ENCODE measurements at regions of chr2 and their contacts with region 1.

Region 1: DNA sequence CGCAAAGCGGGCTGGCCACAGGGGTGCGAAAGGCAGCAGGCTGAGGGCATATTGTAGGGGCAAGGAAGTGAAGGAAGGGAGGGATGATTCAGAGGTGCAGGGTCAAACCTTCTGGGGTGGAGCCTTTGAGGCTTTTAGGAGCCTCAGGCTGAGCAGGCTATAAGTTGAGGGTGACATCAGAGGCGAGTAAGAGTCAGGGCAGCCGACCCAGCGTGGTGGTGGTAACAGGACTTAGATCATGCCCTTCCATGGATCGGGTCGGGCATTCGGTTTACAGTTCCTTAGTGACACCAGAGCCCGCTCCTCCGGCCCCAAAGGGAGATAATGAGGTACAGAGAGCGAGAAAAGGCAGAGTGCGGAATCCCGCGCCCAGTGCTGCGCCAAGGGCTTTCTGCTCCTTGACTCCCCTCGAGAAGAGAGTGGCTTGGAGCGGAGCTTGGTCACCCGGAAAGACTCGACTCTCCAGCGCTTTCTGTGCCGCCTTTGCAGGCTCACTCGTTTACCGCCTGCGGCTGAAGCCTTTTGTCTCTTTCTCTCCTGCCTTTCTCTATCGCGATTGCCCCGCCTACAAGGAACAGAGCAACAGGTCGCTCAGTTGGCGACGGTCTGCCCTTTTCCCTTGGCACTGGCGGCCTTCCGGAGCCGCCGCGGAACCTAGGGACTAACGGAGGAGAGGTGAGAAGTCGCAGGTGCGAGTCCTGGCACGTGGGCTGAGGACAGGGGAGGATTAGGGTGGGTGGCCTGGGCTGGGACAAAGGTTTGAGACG is 720 bp downstream of the LBX2 start:
- DNase-seq: no peak
- ATAC-seq: peak; percentile 14
- H3K4me3 Mint-ChIP-seq: peak overlapping the region; percentile 87
- H3K27ac Mint-ChIP-seq: peak overlapping the region; percentile 62
- H3K4me1 Mint-ChIP-seq: peaks cover 42% of the 10 kb centered on the region
- H3K27me3 Mint-ChIP-seq: peaks cover 30% of the 10 kb centered on the region
- CTCF ChIP-seq: no peak

Region 2: DNA sequence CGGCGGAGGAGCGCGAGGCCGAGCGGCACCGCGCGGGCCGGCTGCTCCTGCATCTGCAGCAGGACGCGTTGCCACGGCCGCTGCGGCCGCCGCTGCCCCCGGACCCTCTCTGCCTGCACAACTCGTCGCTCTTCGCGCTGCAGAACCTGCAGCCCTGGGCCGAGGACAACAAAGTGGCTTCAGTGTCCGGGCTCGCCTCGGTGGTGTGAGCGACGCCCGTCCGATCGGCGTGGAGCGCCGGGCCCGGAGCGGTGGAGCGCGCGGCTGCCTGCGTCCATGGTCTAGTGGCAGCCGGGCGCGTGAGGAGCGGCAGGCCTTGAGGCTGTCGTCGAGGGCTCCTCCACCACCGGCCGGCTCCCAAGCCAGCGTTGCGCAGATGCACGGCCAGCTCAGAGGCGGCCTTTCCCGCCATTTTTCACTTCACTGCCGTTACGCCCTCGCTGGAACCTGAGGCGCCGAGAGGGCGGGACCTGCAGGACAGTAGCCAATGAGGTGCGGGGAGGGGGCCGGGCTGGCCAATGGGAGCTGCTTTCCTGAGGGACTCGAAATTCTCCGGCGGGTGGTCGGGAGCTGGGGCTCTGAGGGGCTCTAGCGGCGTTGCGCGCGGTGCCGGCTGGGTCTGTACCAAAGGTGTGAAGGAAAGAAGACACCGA is 17.4 kb after region 1 on chr2:
- CTCF ChIA-PET with region 1: interaction called, 3 read pairs
- POLR2A ChIA-PET with region 1: interaction called, 18 read pairs
- intact Hi-C with region 1: loop called (anchors 2 kb)
- DNase-seq: peak; percentile 66
- ATAC-seq: peak; percentile 87
- H3K4me3 Mint-ChIP-seq: peak overlapping the region; percentile 78
- H3K27ac Mint-ChIP-seq: no peak overlapping the region
- H3K4me1 Mint-ChIP-seq: peaks cover 28% of the 10 kb centered on the region
- H3K27me3 Mint-ChIP-seq: peaks cover 57% of the 10 kb centered on the region
- CTCF ChIP-seq: no peak

Region 3: DNA sequence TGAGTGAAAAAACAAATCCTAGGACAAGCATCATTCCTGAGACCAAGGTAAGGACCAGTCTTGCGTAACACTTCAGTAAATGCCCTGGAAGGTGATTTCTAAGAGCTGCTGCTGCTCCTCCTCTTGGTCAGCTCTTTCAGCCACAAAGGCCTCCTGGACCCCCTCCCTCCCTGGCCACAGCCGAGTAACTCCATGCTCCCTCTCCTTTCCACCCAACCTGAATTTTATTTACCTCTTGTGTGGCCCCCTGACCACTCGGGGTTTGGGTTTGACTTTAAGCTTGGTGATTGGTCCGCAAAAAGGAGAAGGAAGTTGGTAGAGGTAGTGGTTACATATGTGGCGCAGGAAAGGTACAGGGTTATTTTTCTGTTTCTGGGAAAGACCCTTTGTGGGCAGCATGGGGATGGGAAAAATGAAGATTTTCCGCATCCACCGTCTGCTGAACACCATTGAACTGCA is 40.2 kb after region 1 on chr2:
- CTCF ChIA-PET with region 1: no interaction called
- POLR2A ChIA-PET with region 1: no interaction called
- intact Hi-C with region 1: no loop called
- DNase-seq: no peak
- ATAC-seq: peak; percentile 77
- H3K4me3 Mint-ChIP-seq: peak overlapping the region; percentile 81
- H3K27ac Mint-ChIP-seq: peak overlapping the region; percentile 89
- H3K4me1 Mint-ChIP-seq: peaks cover 31% of the 10 kb centered on the region
- H3K27me3 Mint-ChIP-seq: no peaks in the 10 kb centered on the region
- CTCF ChIP-seq: no peak

Measured in activated B cell treated with CpG ODN at 0.5 μM for 24 hours (primary cell).